Astrocyte of the cerebellum (primary cell): ENCODE measurements at regions of chr18 and their contacts with region 1.

Region 1: DNA sequence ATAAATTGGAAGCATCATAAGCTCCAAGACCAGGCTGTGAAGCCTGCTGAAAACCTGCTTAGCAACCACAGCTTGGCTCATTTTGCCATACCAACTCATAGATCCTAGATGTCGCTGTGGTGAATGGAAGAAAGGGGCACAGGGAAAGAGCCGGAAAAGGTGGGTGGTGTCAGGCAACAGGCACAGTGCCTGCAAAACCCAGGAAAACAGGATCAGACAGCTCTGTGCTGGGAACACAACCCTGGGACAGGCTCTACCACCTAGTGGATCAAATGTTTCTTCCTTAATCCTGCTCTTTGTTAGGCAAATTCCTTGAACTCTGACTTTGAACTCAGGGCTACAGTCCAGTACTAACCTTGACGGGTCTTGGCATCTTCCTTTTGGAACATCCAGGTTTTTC is 31.6 kb downstream of the TWSG1 start:
- DNase-seq: peak; percentile 19
- H3K4me3 ChIP-seq: no peak overlapping the region
- CTCF ChIP-seq: peak; percentile 62

Region 2: GRCh38 chr18:9449600-9450414 is 83.6 kb after region 1 on chr18:
- in situ Hi-C with region 1: no loop called
- DNase-seq: no peak
- H3K4me3 ChIP-seq: no peak overlapping the region
- CTCF ChIP-seq: no peak

Region 3: DNA sequence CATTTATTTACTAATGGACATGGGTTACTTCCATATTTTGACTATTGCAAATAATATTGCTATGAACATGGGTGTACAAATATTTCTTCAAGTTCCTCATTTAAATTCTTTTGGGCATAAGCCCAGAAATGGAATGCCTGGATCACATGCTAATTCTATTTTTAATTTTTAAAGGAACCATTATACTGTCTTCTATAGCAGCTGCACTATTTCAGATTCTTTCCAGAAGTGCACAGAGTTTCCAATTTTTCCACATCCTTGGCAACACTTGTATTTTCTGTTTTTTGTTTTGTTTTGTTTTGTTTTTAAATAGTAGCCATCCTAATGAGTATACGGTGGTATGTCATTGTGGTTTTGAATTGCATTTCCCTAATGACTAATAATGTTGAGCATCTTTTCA is 100.7 kb after region 1 on chr18:
- in situ Hi-C with region 1: loop called (anchors 5 kb)
- DNase-seq: no peak
- H3K4me3 ChIP-seq: no peak overlapping the region
- CTCF ChIP-seq: no peak